ENCODE measurements at regions of chr14 and their contacts with region 1.

Region 1: GRCh38 chr14:105314287-105315200 is at the start of gene PACS2:
- DNase-seq: peak; percentile 80
- H3K4me3 Mint-ChIP-seq: peak within 1 kb of the TSS; percentile 81
- H3K27ac Mint-ChIP-seq: peak within 1 kb of the TSS; percentile 61
- H3K4me1 Mint-ChIP-seq: peaks cover 34% of the 10 kb centered on the region
- H3K27me3 Mint-ChIP-seq: no peaks in the 10 kb centered on the region
- total RNA-seq, gene PACS2: 28.3 to 29.9 TPM

Region 2: DNA sequence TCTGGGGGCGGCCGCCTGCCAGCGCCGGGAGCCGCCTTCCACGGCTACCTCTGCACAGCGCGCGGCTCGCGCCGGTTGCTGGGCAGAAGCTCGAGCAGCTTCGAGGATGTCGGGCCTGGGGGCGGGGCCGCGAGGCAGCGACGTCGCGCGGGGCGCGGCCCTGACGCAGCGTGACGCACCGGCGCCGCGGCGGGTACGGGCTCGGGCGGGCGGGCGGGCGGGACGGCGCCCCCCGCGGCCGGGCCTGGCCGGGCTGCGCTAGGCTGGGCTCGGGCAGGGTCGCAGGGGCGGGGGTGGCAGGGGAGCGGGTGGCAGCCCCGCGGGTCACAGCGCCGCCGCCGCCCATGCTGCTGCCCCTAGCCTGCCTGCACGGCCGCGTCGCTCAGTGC is 66.2 kb before region 1 on chr14 and contains the start of gene BTBD6:
- CTCF ChIA-PET with region 1: no interaction called
- POLR2A ChIA-PET with region 1: interaction called, 12 read pairs
- DNase-seq: peak; percentile 91
- H3K4me3 Mint-ChIP-seq: peak within 1 kb of the TSS; percentile 73
- H3K27ac Mint-ChIP-seq: peak within 1 kb of the TSS; percentile 65
- H3K4me1 Mint-ChIP-seq: peaks cover 34% of the 10 kb centered on the region
- H3K27me3 Mint-ChIP-seq: no peaks in the 10 kb centered on the region
- total RNA-seq, gene BTBD6: 44.2 to 45.7 TPM

Region 3: GRCh38 chr14:105258846-105259245 is 55.7 kb before region 1 on chr14:
- CTCF ChIA-PET with region 1: no interaction called
- POLR2A ChIA-PET with region 1: no interaction called
- DNase-seq: no peak
- H3K4me3 Mint-ChIP-seq: no peak overlapping the region
- H3K27ac Mint-ChIP-seq: no peak overlapping the region
- H3K4me1 Mint-ChIP-seq: peaks cover 9% of the 10 kb centered on the region
- H3K27me3 Mint-ChIP-seq: no peaks in the 10 kb centered on the region

Region 4: DNA sequence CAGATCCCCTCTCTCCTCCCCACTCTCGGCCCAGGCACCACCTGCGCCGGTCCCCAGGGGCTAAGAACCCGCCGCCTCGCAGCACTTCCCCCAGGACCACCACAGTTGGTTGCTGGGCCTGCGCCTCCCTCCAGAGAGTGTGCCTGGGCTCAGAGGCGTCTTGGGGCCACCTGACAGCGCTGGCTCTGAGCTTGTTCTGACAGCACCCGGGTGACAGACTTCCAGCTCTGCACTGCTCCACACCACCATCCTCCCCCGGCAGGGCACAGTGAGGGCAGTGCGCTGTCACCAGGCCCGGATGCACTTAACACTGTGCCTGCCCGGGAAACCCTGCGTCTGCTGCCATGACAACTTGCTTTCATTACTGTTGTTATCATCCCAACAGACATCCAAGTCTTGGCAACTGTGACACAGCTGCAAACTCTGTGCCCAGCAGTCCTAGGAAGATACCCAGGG is 20.4 kb before region 1 on chr14:
- CTCF ChIA-PET with region 1: interaction called, 3 read pairs
- POLR2A ChIA-PET with region 1: interaction called, 28 read pairs
- DNase-seq: peak; percentile 81
- H3K4me3 Mint-ChIP-seq: peak overlapping the region; percentile 56
- H3K27ac Mint-ChIP-seq: peak overlapping the region; percentile 91
- H3K4me1 Mint-ChIP-seq: peaks cover 54% of the 10 kb centered on the region
- H3K27me3 Mint-ChIP-seq: no peaks in the 10 kb centered on the region

Region 5: DNA sequence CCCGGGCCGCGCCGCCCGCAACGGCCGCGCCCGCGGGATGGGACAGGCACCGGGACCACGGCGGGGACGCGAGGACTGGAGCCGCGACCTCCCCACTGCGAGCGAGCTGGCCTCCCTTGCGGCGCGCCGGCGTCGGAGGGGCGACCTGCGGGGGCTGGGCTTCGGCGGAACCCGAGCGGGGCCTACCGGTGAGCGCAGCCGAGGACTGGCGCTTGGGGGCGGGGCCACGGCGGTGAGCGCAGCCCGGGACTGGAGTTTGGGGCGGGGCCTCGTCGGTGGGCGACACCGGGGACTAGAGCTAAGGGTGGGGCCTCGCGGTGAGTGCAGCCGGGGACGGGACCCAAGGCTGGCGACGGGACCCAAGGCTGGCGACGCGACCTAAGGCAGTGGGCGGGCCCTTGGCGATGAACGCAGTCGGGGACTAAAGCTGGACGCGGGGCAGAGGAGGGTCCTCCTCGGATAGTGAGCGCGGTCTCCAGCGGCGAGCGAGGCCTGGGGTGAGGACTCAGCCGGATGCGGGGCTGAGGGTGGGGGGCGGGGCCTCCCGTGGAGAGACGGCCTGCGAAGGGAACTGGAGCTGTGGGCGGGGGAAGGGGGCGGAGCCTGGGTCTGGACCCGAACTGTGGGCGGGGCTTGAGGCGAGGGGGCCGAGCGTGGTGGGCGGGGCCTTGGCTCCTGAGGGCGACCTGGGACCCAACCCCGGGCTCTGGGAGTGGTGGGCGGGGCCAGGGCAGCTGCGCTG is 13.6 kb before region 1 on chr14 and contains the start of gene BRF1:
- CTCF ChIA-PET with region 1: interaction called, 10 read pairs
- POLR2A ChIA-PET with region 1: interaction called, 93 read pairs
- DNase-seq: peak; percentile 99
- H3K4me3 Mint-ChIP-seq: peak within 1 kb of the TSS; percentile 90
- H3K27ac Mint-ChIP-seq: peak within 1 kb of the TSS; percentile 89
- H3K4me1 Mint-ChIP-seq: peaks cover 44% of the 10 kb centered on the region
- H3K27me3 Mint-ChIP-seq: no peaks in the 10 kb centered on the region
- total RNA-seq, gene BRF1: 37.4 to 40.7 TPM